B cell (primary cell): ENCODE measurements at regions of chr16 and their contacts with region 1.

Region 1: GRCh38 chr16:15747937-15748336 is 97.9 kb downstream of the NDE1 start:
- DNase-seq: no peak
- ATAC-seq: no peak
- H3K4me3 ChIP-seq: no peak overlapping the region
- H3K4me3 Mint-ChIP-seq: no peak overlapping the region
- H3K27ac ChIP-seq: no peak overlapping the region
- H3K27ac Mint-ChIP-seq: no peak overlapping the region
- H3K4me1 ChIP-seq: no peaks in the 10 kb centered on the region
- H3K4me1 Mint-ChIP-seq: no peaks in the 10 kb centered on the region
- H3K27me3 ChIP-seq: no peaks in the 10 kb centered on the region
- H3K27me3 Mint-ChIP-seq: no peaks in the 10 kb centered on the region
- CTCF ChIP-seq: no peak

Region 2: DNA sequence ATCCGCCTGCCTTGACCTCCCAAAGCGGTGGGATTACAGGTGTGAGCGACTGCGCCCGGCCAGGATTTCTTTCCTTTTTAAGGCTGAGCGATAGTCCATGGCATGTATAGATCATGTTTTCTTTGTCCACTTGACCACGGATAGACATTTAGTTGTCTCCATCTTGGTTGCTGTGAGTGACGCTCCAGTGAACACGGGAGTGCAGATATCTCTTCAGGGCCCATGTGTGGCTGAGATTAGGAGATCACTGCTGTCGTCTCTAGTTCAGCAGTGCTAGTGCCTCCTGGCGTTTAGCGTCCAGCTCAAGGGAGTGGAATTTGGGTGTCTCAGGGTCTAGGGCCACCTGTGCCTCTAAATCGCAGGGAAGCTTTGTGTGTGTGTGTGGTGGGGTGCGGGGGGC is 243.0 kb after region 1 on chr16:
- CTCF ChIA-PET with region 1: no interaction called
- POLR2A ChIA-PET with region 1: interaction called, 10 read pairs
- intact Hi-C with region 1: no loop called
- DNase-seq: no peak
- ATAC-seq: no peak
- H3K4me3 ChIP-seq: no peak overlapping the region
- H3K4me3 Mint-ChIP-seq: peak overlapping the region; percentile 35
- H3K27ac ChIP-seq: no peak overlapping the region
- H3K27ac Mint-ChIP-seq: no peak overlapping the region
- H3K4me1 ChIP-seq: peaks cover 0 to 3% of the 10 kb centered on the region in 2 donors
- H3K4me1 Mint-ChIP-seq: peaks cover 50% of the 10 kb centered on the region
- H3K27me3 ChIP-seq: no peaks in the 10 kb centered on the region
- H3K27me3 Mint-ChIP-seq: no peaks in the 10 kb centered on the region
- CTCF ChIP-seq: no peak